Sigmoid colon (tissue), 7 donors: ENCODE measurements at regions of chr10 and their contacts with region 1.

Region 1: GRCh38 chr10:19498393-19499290 is 317.6 kb upstream of the PLXDC2 start:
- DNase-seq: peak; percentile 58
- H3K4me3 ChIP-seq: no peak overlapping the region
- H3K27ac ChIP-seq: no peak overlapping the region
- H3K4me1 ChIP-seq: no peaks in the 10 kb centered on the region
- H3K27me3 ChIP-seq: no peaks in the 10 kb centered on the region
- CTCF ChIP-seq: no peak
- EP300 ChIP-seq: no peak
- POLR2A ChIP-seq: no peak

Region 2: DNA sequence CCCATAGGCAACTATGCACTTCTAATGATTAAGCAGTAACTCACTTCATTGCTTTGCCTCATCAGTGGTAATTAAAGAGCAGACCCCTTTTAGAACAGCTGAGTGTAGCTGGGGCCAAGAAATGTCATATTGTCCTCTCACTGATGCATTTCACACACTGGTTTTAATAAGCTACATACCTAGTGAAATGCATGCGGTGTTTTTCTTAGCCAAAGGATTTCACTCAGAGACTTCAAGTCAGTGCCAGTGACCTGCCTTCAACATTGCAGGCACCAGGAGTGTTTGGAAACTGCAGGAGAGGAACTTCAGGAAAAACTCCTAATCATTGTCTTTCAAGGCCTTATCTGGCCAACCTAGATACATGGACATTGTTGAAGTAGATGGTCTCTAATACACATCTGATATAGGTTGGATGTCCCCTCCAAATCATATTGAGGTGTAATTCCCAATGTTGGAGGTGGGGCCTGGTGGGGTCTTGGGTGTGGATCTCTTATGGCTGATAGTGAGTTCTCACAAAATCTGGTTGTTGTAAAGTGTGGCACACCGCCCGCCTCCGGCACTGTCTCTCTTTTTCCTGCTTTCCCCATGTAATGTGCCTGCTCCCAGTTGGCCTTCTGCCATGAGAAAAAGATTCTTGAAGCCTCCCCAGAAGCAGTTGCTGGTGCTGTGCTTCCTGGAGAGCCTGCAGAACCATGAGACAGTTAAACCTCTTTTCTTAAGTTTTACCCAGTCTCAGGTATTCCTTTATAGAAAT is 64.9 kb after region 1 on chr10:
- intact Hi-C with region 1: loop called (anchors 10 kb)
- DNase-seq: no peak
- H3K4me3 ChIP-seq: no peak overlapping the region
- H3K27ac ChIP-seq: peak overlapping the region in 1 of 4 donors; percentile 41
- H3K4me1 ChIP-seq: no peaks in the 10 kb centered on the region
- H3K27me3 ChIP-seq: no peaks in the 10 kb centered on the region
- CTCF ChIP-seq: no peak
- EP300 ChIP-seq: no peak
- POLR2A ChIP-seq: no peak

Region 3: GRCh38 chr10:19638182-19638895 is 139.7 kb after region 1 on chr10:
- intact Hi-C with region 1: no loop called
- DNase-seq: no peak
- H3K4me3 ChIP-seq: peak overlapping the region in 3 of 4 donors; percentile 20 to 31 (median 28)
- H3K27ac ChIP-seq: peak overlapping the region; percentile 58 to 70 (median 63)
- H3K4me1 ChIP-seq: peaks cover 0 to 10% (median 7%) of the 10 kb centered on the region in 4 donors
- H3K27me3 ChIP-seq: no peaks in the 10 kb centered on the region
- CTCF ChIP-seq: no peak
- EP300 ChIP-seq: no peak
- POLR2A ChIP-seq: no peak